Activated CD4-positive, alpha-beta T cell treated with anti-CD3 and anti-CD28 coated beads, Interleukin-2, amount 10 ng/mL, durations not matched to agents 24 days and 14 days (primary cell): ENCODE measurements at regions of chr4 and their contacts with region 1.

Region 1: DNA sequence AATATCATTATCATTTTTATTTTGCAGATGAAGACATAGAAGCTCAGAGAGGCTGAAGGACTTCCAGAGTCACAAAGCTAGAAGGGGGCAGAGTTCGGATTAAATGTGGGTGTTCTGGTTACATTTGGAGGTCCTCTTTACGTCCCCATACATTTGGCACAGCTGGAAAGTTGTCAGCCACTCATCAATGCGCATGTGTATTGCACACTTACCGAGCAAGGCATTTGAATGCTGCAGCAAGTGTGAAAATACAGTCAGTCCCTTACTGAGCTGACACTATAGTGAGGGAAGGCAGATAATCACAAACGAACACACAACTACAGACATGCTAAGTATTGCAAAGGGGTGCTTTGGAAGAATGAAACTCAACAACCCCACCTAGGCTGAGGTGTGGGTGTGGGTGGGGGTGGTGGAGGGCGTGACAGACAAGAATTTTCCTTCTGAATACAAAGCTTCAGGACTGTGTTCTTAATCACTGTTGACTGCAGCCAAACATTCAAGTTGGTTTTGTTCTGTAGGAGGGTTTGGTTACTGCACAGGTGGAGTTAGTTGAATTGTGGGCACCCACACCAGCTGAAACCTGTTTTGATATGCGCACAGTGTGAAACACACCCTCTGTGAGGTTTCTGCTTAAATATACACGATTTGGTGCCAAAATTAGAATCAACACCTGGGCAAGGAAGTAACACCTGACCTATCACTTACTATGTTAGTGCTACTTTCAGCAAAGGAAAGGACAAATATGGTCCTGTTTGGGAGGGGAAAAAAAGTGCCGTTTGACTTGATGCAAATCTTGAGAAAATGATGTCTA is 72.4 kb downstream of the COQ2 start:
- DNase-seq: peak; percentile 86
- H3K4me3 Mint-ChIP-seq: peak overlapping the region; percentile 63
- H3K27ac Mint-ChIP-seq: peak overlapping the region; percentile 64
- H3K4me1 Mint-ChIP-seq: peaks cover 46% of the 10 kb centered on the region
- H3K27me3 Mint-ChIP-seq: peaks cover 12% of the 10 kb centered on the region

Region 2: GRCh38 chr4:83149865-83150652 is 62.2 kb before region 1 on chr4:
- intact Hi-C with region 1: loop called (anchors 5 kb)
- DNase-seq: no peak
- H3K4me3 Mint-ChIP-seq: no peak overlapping the region
- H3K27ac Mint-ChIP-seq: no peak overlapping the region
- H3K4me1 Mint-ChIP-seq: peaks cover 12% of the 10 kb centered on the region
- H3K27me3 Mint-ChIP-seq: peaks cover 12% of the 10 kb centered on the region